GM18951 (cell line): ENCODE measurements at regions of chr17 and their contacts with region 1.

Region 1: DNA sequence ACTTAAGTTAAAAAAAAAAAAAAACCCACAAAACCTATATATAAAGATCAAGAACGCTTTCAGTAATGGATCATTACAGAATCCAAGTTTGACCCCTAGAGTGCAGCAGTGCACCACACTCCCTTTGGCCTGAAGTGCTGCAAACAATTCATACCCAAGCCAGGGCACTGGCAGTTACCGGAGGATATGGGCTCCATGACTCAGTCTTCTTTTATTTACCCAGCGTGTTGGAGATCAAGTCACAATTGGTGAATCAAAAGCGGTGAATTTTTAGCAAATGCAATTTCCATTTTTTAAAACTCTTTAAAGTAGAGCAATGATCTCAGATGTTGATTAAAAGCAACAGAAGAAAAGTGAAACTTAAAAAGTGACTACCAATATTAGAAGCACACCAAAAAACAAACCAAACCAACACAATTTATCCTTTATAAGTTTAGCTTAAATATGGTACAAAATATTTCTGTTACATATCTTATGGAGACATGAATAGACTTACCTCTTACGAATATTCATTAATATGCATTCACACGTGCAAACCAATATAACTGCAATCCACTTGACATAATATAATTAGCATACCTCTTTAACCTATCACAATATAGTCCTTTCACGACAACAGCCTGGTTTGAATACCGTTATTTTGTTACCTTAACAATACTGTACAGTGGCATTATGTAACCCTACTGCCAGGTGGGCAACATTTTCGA is 46.3 kb downstream of the ZNF652 start:
- POLR2A ChIP-seq: no peak

Region 2: GRCh38 chr17:49146620-49147306 is 168.9 kb before region 1 on chr17:
- in situ Hi-C with region 1: no loop called
- POLR2A ChIP-seq: no peak

Region 3: DNA sequence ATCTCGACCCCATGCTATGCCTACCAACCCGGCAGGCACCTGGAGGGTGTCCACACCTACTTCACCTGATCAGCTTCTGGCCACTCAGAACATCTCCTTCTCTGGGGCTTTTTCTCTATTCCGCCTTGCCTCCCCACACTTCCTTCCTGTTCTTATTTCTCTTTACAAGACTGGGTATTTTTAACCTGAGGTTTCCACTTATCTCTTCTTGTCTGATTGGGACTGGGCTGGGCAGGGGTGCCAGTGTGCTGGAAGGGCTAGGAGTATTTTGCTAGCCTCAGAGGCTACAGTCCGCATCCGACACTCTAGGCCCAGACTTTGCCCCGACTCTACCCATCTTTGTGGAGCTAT is 72.6 kb after region 1 on chr17:
- in situ Hi-C with region 1: loop called (anchors 5 kb)
- POLR2A ChIP-seq: peak; percentile 36